ENCODE measurements at regions of chr11 and their contacts with region 1.

Region 1: GRCh38 chr11:77411717-77412441 is 62.0 kb downstream of the PAK1 start:
- DNase-seq: peak; percentile 92
- H3K4me3 ChIP-seq: peak overlapping the region; percentile 50
- H3K27ac ChIP-seq: peak overlapping the region; percentile 59
- H3K4me1 ChIP-seq: peaks cover 14% of the 10 kb centered on the region
- H3K27me3 ChIP-seq: no peaks in the 10 kb centered on the region
- CTCF ChIP-seq: no peak

Region 2: GRCh38 chr11:77233011-77233410 is 178.9 kb before region 1 on chr11:
- intact Hi-C with region 1: no loop called
- DNase-seq: no peak
- H3K4me3 ChIP-seq: no peak overlapping the region
- H3K27ac ChIP-seq: no peak overlapping the region
- H3K4me1 ChIP-seq: no peaks in the 10 kb centered on the region
- H3K27me3 ChIP-seq: no peaks in the 10 kb centered on the region
- CTCF ChIP-seq: no peak

Region 3: GRCh38 chr11:77467993-77468392 is 56.1 kb after region 1 on chr11:
- intact Hi-C with region 1: loop called (anchors 5 kb)
- DNase-seq: no peak
- H3K4me3 ChIP-seq: no peak overlapping the region
- H3K27ac ChIP-seq: peak overlapping the region; percentile 66
- H3K4me1 ChIP-seq: peaks cover 5% of the 10 kb centered on the region
- H3K27me3 ChIP-seq: no peaks in the 10 kb centered on the region
- CTCF ChIP-seq: no peak

Measured in colonic mucosa (tissue), 4 donors.